ENCODE measurements at regions of chr5 and their contacts with region 1.

Region 1: DNA sequence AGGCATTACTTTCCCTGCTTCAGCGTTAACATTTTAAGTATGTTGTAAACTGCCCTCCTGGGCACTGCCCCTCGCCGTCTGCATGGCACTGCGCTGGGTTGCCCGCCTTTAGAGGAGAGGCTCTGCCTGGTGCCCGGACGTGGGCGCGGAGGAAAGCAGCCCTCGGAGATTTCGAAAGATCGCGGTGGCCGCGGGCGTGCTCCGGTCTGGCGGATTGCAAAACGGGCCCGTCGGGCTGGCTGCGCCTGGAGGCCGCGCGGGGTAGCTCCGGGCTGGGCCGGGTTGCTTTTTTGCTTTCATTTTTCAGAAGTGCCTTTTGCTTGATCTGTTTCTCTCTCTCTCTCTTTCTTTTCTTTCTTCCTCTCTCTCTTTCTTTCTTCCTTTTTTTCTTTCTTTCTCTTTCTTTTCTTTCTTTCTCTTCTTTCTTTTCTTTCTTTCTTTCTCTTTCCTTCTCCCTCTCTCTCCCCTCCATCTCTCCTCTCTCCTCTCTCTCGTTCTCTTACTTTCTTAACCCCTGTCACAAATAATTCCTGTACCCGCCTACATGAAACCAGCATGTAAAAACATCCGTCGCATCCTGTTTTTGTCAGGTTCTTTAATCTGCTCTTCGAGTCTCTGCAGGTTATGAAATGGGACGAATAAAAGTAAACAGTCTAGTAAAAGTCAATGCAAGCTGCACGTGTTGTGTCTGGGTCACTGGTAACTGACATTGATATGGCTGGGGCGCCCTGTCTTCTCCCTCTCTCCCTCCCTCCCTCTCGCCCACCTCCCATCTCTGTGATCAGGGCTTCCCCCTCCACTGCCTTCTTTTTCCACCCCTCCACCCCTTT is 1.7 kb downstream of the FST start:
- DNase-seq: peak; percentile 34 to 73 (median 50)
- ATAC-seq: peak; percentile 78
- H3K4me3 ChIP-seq: peak overlapping the region; percentile 67
- H3K4me3 Mint-ChIP-seq: peak overlapping the region; percentile 86 to 99 (median 90)
- H3K27ac ChIP-seq: no peak overlapping the region
- H3K27ac Mint-ChIP-seq: peak overlapping the region; percentile 25 to 93 (median 74)
- H3K4me1 ChIP-seq: peaks cover 10 to 11% of the 10 kb centered on the region in 2 donors
- H3K4me1 Mint-ChIP-seq: peaks cover 34 to 46% (median 42%) of the 10 kb centered on the region in 7 donors
- H3K27me3 ChIP-seq: peaks cover 0 to 13% of the 10 kb centered on the region in 2 donors
- H3K27me3 Mint-ChIP-seq: peaks cover 48 to 80% (median 61%) of the 10 kb centered on the region in 5 donors

Region 2: GRCh38 chr5:53560506-53561191 is 78.5 kb after region 1 on chr5 and contains the start of gene NDUFS4:
- CTCF ChIA-PET with region 1: no interaction called
- POLR2A ChIA-PET with region 1: no interaction called
- intact Hi-C with region 1: loop called (anchors 1 kb)
- DNase-seq: peak; percentile 44 to 76 (median 68)
- ATAC-seq: peak; percentile 94
- H3K4me3 ChIP-seq: peak within 1 kb of the TSS; percentile 54
- H3K4me3 Mint-ChIP-seq: peak within 1 kb of the TSS; percentile 97 to 100 (median 98)
- H3K27ac ChIP-seq: peak within 1 kb of the TSS; percentile 74
- H3K27ac Mint-ChIP-seq: peak within 1 kb of the TSS; percentile 91 to 99 (median 95)
- H3K4me1 ChIP-seq: peaks cover 0 to 18% of the 10 kb centered on the region in 2 donors
- H3K4me1 Mint-ChIP-seq: peaks cover 20 to 56% (median 50%) of the 10 kb centered on the region in 7 donors
- H3K27me3 ChIP-seq: no peaks in the 10 kb centered on the region
- H3K27me3 Mint-ChIP-seq: peaks cover 13 to 35% (median 28%) of the 10 kb centered on the region in 5 donors
- total RNA-seq, gene NDUFS4: 23.4 to 54.8 (median 35.6) TPM

Region 3: GRCh38 chr5:54217826-54218503 is 735.9 kb after region 1 on chr5:
- CTCF ChIA-PET with region 1: no interaction called
- POLR2A ChIA-PET with region 1: no interaction called
- intact Hi-C with region 1: loop called (anchors 1 to 2 kb)
- DNase-seq: peak in 3 of 9 donors; percentile 8 to 37 (median 28)
- ATAC-seq: peak; percentile 51
- H3K4me3 ChIP-seq: no peak overlapping the region
- H3K4me3 Mint-ChIP-seq: no peak overlapping the region
- H3K27ac ChIP-seq: no peak overlapping the region
- H3K27ac Mint-ChIP-seq: no peak overlapping the region
- H3K4me1 ChIP-seq: no peaks in the 10 kb centered on the region
- H3K4me1 Mint-ChIP-seq: peaks cover 0 to 23% (median 10%) of the 10 kb centered on the region in 7 donors
- H3K27me3 ChIP-seq: no peaks in the 10 kb centered on the region
- H3K27me3 Mint-ChIP-seq: peaks cover 0 to 2% (median 0%) of the 10 kb centered on the region in 5 donors

Region 4: GRCh38 chr5:54415896-54416601 is 933.9 kb after region 1 on chr5:
- CTCF ChIA-PET with region 1: no interaction called
- POLR2A ChIA-PET with region 1: no interaction called
- intact Hi-C with region 1: loop called in 1 of 2 experiments (anchors 1 kb)
- DNase-seq: no peak
- ATAC-seq: no peak
- H3K4me3 ChIP-seq: no peak overlapping the region
- H3K4me3 Mint-ChIP-seq: no peak overlapping the region
- H3K27ac ChIP-seq: no peak overlapping the region
- H3K27ac Mint-ChIP-seq: no peak overlapping the region
- H3K4me1 ChIP-seq: no peaks in the 10 kb centered on the region
- H3K4me1 Mint-ChIP-seq: peaks cover 0 to 1% (median 0%) of the 10 kb centered on the region in 7 donors
- H3K27me3 ChIP-seq: no peaks in the 10 kb centered on the region
- H3K27me3 Mint-ChIP-seq: peaks cover 4 to 32% (median 10%) of the 10 kb centered on the region in 5 donors

Region 5: DNA sequence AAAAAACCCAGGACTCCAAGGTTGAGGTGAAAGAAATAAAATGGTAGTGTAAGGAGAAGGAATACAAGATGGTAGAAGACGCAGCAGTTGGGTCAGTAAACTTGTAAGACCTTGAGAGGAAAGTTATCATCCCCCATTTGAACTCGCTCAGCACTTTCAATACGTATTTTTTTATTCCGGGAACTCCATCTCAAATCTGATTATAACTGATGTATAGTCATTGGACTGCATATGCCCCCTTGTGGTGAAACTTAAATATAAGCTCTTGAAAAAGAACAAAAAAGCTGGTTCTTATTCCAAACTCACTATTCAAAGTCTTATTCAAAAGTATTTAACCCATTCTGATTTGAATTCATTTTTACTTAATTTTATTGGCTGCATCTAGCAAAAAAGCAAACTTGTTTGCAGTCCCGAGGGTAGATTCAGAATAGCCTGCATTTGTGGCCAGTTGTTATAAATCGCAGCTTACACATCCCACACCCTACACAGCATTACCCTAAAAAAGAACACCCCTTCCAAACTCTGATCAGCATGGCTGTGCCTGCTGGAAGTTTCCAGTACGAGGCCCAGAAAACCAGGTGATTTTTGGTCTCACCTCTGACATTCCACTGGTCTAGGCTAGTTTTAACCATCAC is 1385.3 kb after region 1 on chr5:
- CTCF ChIA-PET with region 1: no interaction called
- POLR2A ChIA-PET with region 1: no interaction called
- intact Hi-C with region 1: loop called in 1 of 2 experiments (anchors 5 kb)
- DNase-seq: peak in 7 of 9 donors; percentile 38 to 66 (median 59)
- ATAC-seq: peak; percentile 83
- H3K4me3 ChIP-seq: peak overlapping the region; percentile 33
- H3K4me3 Mint-ChIP-seq: peak overlapping the region; percentile 2 to 80 (median 52)
- H3K27ac ChIP-seq: no peak overlapping the region
- H3K27ac Mint-ChIP-seq: peak overlapping the region in 4 of 9 donors; percentile 44 to 60 (median 52)
- H3K4me1 ChIP-seq: no peaks in the 10 kb centered on the region
- H3K4me1 Mint-ChIP-seq: peaks cover 0 to 20% (median 9%) of the 10 kb centered on the region in 7 donors
- H3K27me3 ChIP-seq: no peaks in the 10 kb centered on the region
- H3K27me3 Mint-ChIP-seq: peaks cover 0 to 69% (median 11%) of the 10 kb centered on the region in 5 donors